Activated CD8-positive, alpha-beta T cell treated with anti-CD3 and anti-CD28 coated beads, Interleukin-2, amount 10 ng/mL, durations not matched to agents 7 days and 5 days (primary cell): ENCODE measurements at regions of chr5 and their contacts with region 1.

Region 1: DNA sequence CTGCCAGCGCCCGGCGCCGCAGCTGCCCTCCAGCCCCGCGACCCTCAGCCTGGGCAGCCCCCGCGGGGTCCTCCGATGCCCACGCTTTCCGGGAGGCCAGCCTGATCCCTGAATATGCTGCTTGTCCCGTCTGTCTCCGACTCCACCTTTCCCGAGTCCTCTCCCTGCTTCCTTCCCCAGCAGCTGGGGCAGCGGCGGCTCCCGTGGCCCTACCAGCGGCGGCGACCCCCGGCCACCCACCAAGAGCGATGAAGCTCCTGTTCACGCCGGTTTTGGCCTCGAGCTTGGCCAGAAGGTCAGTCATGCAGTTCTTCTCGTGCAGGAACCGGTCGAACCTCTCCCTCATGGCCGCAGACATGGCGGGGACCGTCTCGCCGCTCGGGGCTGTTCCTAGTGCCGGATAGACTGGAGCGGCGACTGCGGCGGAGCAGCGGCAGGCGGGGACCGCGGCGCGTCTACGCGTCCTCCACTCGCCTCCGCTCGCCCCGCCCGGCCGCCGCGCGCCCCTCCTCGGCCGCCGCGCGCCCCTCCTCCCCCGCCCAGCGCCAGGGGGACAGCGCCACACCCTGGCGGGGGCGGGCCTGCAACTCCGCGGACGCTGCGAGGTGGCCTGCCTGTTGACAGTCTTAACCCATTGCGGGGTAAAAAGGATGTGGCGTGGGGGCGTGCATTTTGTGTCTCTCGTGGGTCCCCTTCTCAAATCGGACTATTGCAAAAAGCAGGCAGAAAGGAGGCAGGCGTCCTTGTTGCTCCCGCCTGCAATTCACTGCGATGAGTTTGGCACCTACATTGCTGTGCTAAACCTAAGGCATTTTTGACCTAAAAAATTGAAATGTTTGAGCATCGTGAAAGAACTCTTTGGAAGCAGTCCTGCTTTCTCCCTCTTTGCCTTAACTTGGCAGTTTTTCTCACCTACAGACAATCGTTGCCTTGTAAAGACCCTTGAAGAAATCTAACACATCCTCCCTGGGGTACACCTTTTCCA is at the start of gene REEP5:
- DNase-seq: peak; percentile 88
- ATAC-seq: peak; percentile 84
- H3K4me3 Mint-ChIP-seq: peak within 1 kb of the TSS; percentile 95
- H3K27ac Mint-ChIP-seq: peak within 1 kb of the TSS; percentile 97
- H3K4me1 Mint-ChIP-seq: peaks cover 70% of the 10 kb centered on the region
- H3K27me3 Mint-ChIP-seq: no peaks in the 10 kb centered on the region
- total RNA-seq, gene REEP5: 77.6 to 85.0 TPM

Region 2: DNA sequence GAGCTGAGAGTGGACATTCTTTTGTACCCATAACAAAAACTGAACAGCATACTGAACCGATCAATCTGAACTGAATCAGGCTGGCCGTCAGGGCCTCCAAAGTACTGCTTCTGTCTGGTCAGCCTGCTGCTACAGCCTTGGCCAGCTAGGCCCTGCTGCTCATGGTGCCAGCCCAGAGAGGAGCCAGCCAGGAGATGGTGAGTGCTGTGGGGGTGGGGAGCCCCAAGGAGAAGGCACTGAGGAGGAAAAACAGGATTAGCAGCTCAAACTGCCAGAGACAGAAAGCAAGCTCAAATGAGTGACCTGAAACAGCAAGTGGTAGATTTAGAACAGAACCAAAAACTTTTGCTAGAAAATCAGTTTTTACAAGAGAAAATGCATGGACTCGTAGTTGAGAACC is 37.1 kb before region 1 on chr5:
- CTCF ChIA-PET with region 1: interaction called, 12 read pairs
- POLR2A ChIA-PET with region 1: interaction called, 3 read pairs
- DNase-seq: no peak
- ATAC-seq: no peak
- H3K4me3 Mint-ChIP-seq: no peak overlapping the region
- H3K27ac Mint-ChIP-seq: peak overlapping the region; percentile 40
- H3K4me1 Mint-ChIP-seq: peaks cover 54% of the 10 kb centered on the region
- H3K27me3 Mint-ChIP-seq: no peaks in the 10 kb centered on the region

Region 3: DNA sequence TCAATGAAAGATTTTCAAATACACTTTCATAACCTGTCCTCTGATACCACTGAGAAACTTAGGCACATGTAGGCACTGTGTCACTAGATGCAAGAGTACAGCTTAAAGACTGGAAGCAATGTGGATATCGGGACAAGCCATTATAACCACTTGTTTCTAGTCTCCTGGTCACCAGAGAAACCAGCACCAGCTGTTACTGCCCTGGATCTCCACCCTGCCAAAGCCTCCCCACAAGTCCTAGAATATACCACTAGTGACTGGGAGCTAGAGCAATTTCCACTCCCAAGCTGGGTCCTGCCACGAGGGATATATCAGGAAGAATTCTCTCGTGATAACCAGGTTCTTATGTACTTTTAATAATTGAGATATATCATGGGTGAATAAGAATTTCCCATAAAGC is 19.6 kb before region 1 on chr5:
- CTCF ChIA-PET with region 1: interaction called, 21 read pairs
- POLR2A ChIA-PET with region 1: interaction called, 6 read pairs
- DNase-seq: no peak
- ATAC-seq: no peak
- H3K4me3 Mint-ChIP-seq: no peak overlapping the region
- H3K27ac Mint-ChIP-seq: no peak overlapping the region
- H3K4me1 Mint-ChIP-seq: peaks cover 8% of the 10 kb centered on the region
- H3K27me3 Mint-ChIP-seq: no peaks in the 10 kb centered on the region

Region 4: GRCh38 chr5:112958093-112959088 is 36.3 kb after region 1 on chr5:
- CTCF ChIA-PET with region 1: interaction called, 32 read pairs
- POLR2A ChIA-PET with region 1: interaction called, 3 read pairs
- DNase-seq: no peak
- ATAC-seq: peak; percentile 39
- H3K4me3 Mint-ChIP-seq: no peak overlapping the region
- H3K27ac Mint-ChIP-seq: no peak overlapping the region
- H3K4me1 Mint-ChIP-seq: peaks cover 37% of the 10 kb centered on the region
- H3K27me3 Mint-ChIP-seq: peaks cover 6% of the 10 kb centered on the region

Region 5: DNA sequence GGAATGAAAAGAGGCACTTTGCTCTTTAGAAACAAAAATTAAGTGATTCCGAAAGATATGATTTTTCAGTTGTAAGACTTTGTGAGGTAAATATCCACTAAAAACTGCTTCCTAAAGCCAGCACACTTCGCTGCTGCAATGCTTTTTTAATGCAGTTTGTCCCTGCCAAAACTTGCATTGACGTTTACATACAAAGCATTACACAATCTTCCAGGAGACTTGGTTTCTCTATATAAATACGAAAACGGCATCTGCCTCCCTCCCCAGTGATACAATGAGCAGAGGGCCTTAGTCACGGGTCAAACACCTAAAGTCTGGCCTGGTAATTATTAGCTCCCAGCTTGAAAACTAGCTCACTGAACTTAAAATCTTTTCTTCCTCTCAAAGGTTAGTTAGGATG is 341.9 kb after region 1 on chr5:
- CTCF ChIA-PET with region 1: no interaction called
- POLR2A ChIA-PET with region 1: no interaction called
- DNase-seq: no peak
- ATAC-seq: no peak
- H3K4me3 Mint-ChIP-seq: no peak overlapping the region
- H3K27ac Mint-ChIP-seq: no peak overlapping the region
- H3K4me1 Mint-ChIP-seq: peaks cover under 1% of the 10 kb centered on the region
- H3K27me3 Mint-ChIP-seq: peaks cover 2% of the 10 kb centered on the region